ENCODE measurements at regions of chr11 and their contacts with region 1.

Region 1: DNA sequence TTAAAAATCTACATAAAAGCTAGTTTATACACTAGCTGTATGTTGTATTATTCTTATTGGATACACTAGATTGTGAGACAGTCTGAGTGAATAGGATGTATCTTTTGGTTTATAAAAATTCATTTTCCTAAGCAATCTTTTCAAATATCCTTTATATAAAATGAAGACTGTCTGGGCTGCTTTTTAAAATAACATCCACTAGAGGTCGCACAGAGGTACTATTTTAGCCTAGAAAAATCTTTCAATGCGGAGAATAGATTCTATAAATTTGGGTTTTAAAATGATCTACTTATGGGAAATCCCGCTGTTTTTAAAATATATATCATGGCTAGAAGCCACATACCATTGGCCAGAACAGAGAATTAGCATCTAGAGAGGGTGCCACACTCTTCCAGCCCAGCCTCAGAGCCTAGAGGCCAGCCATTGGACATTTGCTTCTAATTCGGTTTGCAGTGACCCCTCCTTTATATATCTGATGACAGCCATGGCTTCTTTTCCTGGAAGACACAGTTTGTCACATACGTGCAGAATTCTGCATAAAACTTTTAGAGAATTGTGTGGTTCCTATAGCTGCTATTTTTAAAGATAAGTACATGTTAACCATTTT is 7.3 kb downstream of the C11orf97 start:
- DNase-seq: peak; percentile 40
- H3K4me3 Mint-ChIP-seq: no peak overlapping the region
- H3K27ac Mint-ChIP-seq: no peak overlapping the region
- H3K4me1 Mint-ChIP-seq: peaks cover 5% of the 10 kb centered on the region
- H3K27me3 Mint-ChIP-seq: no peaks in the 10 kb centered on the region
- CTCF ChIP-seq: peak; percentile 44

Region 2: GRCh38 chr11:94243571-94244515 is 275.7 kb before region 1 on chr11:
- CTCF ChIA-PET with region 1: no interaction called
- POLR2A ChIA-PET with region 1: no interaction called
- intact Hi-C with region 1: no loop called
- DNase-seq: no peak
- H3K4me3 Mint-ChIP-seq: no peak overlapping the region
- H3K27ac Mint-ChIP-seq: no peak overlapping the region
- H3K4me1 Mint-ChIP-seq: no peaks in the 10 kb centered on the region
- H3K27me3 Mint-ChIP-seq: peaks cover 1% of the 10 kb centered on the region
- CTCF ChIP-seq: no peak

Region 3: GRCh38 chr11:94504689-94505293 is 14.8 kb before region 1 on chr11:
- CTCF ChIA-PET with region 1: interaction called, 18 read pairs
- POLR2A ChIA-PET with region 1: interaction called, 3 read pairs
- intact Hi-C with region 1: no loop called
- DNase-seq: peak; percentile 61
- H3K4me3 Mint-ChIP-seq: no peak overlapping the region
- H3K27ac Mint-ChIP-seq: no peak overlapping the region
- H3K4me1 Mint-ChIP-seq: no peaks in the 10 kb centered on the region
- H3K27me3 Mint-ChIP-seq: no peaks in the 10 kb centered on the region
- CTCF ChIP-seq: peak; percentile 34

Region 4: DNA sequence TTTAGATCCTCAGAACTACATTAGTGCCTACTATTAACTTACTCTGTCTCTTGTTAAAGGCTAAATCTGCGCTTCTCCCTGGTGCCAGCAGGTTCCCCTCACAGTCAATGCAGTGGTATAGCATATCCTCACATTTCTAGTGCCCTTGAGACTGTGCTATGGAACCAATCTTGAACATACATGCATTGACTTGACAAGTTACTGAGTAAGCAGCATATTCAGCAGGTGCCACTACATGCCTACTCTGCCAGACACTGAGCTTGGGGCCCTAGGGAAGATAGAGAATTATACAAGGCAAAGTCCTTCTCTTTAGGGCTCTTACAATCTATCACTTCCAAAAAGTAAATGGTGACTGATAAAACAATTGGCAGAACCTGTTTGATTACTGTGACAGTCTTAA is 27.3 kb after region 1 on chr11:
- CTCF ChIA-PET with region 1: interaction called, 10 read pairs
- POLR2A ChIA-PET with region 1: no interaction called
- intact Hi-C with region 1: no loop called
- DNase-seq: no peak
- H3K4me3 Mint-ChIP-seq: no peak overlapping the region
- H3K27ac Mint-ChIP-seq: no peak overlapping the region
- H3K4me1 Mint-ChIP-seq: peaks cover 5% of the 10 kb centered on the region
- H3K27me3 Mint-ChIP-seq: no peaks in the 10 kb centered on the region
- CTCF ChIP-seq: no peak

Region 5: DNA sequence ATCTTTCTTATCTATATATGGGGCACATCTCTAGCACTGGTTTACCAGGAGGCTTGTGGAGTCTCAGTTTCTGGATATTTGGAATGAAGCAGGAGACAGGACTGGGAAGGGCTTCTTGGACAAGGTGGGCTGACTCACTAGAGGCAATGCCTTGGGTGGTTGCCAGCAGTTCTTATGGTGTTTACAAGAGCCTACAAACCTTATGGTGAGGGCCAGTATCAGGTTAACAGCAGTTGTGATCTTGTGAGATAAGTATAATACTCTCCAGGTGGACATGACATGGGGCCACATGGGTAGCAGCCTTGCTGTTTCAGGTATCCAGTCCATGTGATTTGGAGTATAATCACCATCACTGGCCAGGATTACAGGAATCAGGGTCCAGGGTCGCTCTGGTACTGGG is 34.4 kb after region 1 on chr11:
- CTCF ChIA-PET with region 1: interaction called, 16 read pairs
- POLR2A ChIA-PET with region 1: no interaction called
- intact Hi-C with region 1: no loop called
- DNase-seq: peak; percentile 64
- H3K4me3 Mint-ChIP-seq: no peak overlapping the region
- H3K27ac Mint-ChIP-seq: no peak overlapping the region
- H3K4me1 Mint-ChIP-seq: no peaks in the 10 kb centered on the region
- H3K27me3 Mint-ChIP-seq: no peaks in the 10 kb centered on the region
- CTCF ChIP-seq: no peak

Region 6: GRCh38 chr11:94563176-94563847 is 43.7 kb after region 1 on chr11:
- CTCF ChIA-PET with region 1: interaction called, 177 read pairs
- POLR2A ChIA-PET with region 1: interaction called, 3 read pairs
- intact Hi-C with region 1: loop called (anchors 1 kb)
- DNase-seq: peak; percentile 68
- H3K4me3 Mint-ChIP-seq: no peak overlapping the region
- H3K27ac Mint-ChIP-seq: no peak overlapping the region
- H3K4me1 Mint-ChIP-seq: peaks cover 7% of the 10 kb centered on the region
- H3K27me3 Mint-ChIP-seq: no peaks in the 10 kb centered on the region
- CTCF ChIP-seq: peak; percentile 50

Region 7: GRCh38 chr11:94576306-94576705 is 56.7 kb after region 1 on chr11:
- CTCF ChIA-PET with region 1: no interaction called
- POLR2A ChIA-PET with region 1: no interaction called
- intact Hi-C with region 1: no loop called
- DNase-seq: no peak
- H3K4me3 Mint-ChIP-seq: no peak overlapping the region
- H3K27ac Mint-ChIP-seq: no peak overlapping the region
- H3K4me1 Mint-ChIP-seq: peaks cover 9% of the 10 kb centered on the region
- H3K27me3 Mint-ChIP-seq: no peaks in the 10 kb centered on the region
- CTCF ChIP-seq: no peak

Region 8: GRCh38 chr11:94897330-94897768 is 377.8 kb after region 1 on chr11:
- CTCF ChIA-PET with region 1: interaction called, 3 read pairs
- POLR2A ChIA-PET with region 1: no interaction called
- intact Hi-C with region 1: loop called (anchors 5 kb)
- DNase-seq: peak; percentile 62
- H3K4me3 Mint-ChIP-seq: no peak overlapping the region
- H3K27ac Mint-ChIP-seq: no peak overlapping the region
- H3K4me1 Mint-ChIP-seq: no peaks in the 10 kb centered on the region
- H3K27me3 Mint-ChIP-seq: no peaks in the 10 kb centered on the region
- CTCF ChIP-seq: peak; percentile 83